Astrocyte of the cerebellum (primary cell): ENCODE measurements at regions of chr1 and their contacts with region 1.

Region 1: GRCh38 chr1:209354111-209354839 is 229.2 kb upstream of the CAMK1G start:
- DNase-seq: peak; percentile 89
- H3K4me3 ChIP-seq: no peak overlapping the region
- CTCF ChIP-seq: peak; percentile 98

Region 2: GRCh38 chr1:209421186-209421585 is 66.9 kb after region 1 on chr1:
- in situ Hi-C with region 1: loop called (anchors 5 kb)
- DNase-seq: no peak
- H3K4me3 ChIP-seq: no peak overlapping the region
- CTCF ChIP-seq: no peak

Region 3: GRCh38 chr1:209627732-209628196 is 273.5 kb after region 1 on chr1:
- in situ Hi-C with region 1: no loop called
- DNase-seq: peak; percentile 16
- H3K4me3 ChIP-seq: no peak overlapping the region
- CTCF ChIP-seq: peak; percentile 96